ENCODE measurements at regions of chr15 and their contacts with region 1.

Region 1: GRCh38 chr15:24956111-24956838 is 1.5 kb downstream of the SNRPN start:
- DNase-seq: peak; percentile 39 to 68
- H3K4me3 ChIP-seq: peak overlapping the region; percentile 70 to 94 (median 80)
- H3K27ac ChIP-seq: peak overlapping the region; percentile 67; the same call in 1 of the 2 replicates
- H3K4me1 ChIP-seq: peaks cover 0 to 8% (median 3%) of the 10 kb centered on the region in 4 experiments; a peak in 2 of 7 replicates
- H3K27me3 ChIP-seq: no peaks in the 10 kb centered on the region
- CTCF ChIP-seq: no peak
- EP300 ChIP-seq: no peak
- POLR2A ChIP-seq: peak; percentile 66 to 94; a peak in 2 of 3 replicates
- RAD21 ChIP-seq: no peak

Region 2: GRCh38 chr15:24898715-24899272 is 57.5 kb before region 1 on chr15:
- CTCF ChIA-PET with region 1: no interaction called
- POLR2A ChIA-PET with region 1: interaction called, 44 read pairs
- DNase-seq: peak; percentile 34 to 58
- H3K4me3 ChIP-seq: peak overlapping the region in 1 of 4 experiments; percentile 14; a peak in 1 of 8 replicates
- H3K27ac ChIP-seq: no peak overlapping the region
- H3K4me1 ChIP-seq: peaks cover 3 to 9% (median 7%) of the 10 kb centered on the region in 4 experiments
- H3K27me3 ChIP-seq: no peaks in the 10 kb centered on the region
- CTCF ChIP-seq: no peak
- EP300 ChIP-seq: peak in 1 of 2 experiments; percentile 84; a peak in 1 of 3 replicates
- POLR2A ChIP-seq: no peak
- RAD21 ChIP-seq: no peak; a peak in 1 of 4 replicates

Region 3: GRCh38 chr15:24944954-24945353 is 11.3 kb before region 1 on chr15:
- CTCF ChIA-PET with region 1: no interaction called
- POLR2A ChIA-PET with region 1: interaction called, 16 read pairs
- DNase-seq: no peak
- H3K4me3 ChIP-seq: no peak overlapping the region
- H3K27ac ChIP-seq: no peak overlapping the region
- H3K4me1 ChIP-seq: no peaks in the 10 kb centered on the region
- H3K27me3 ChIP-seq: no peaks in the 10 kb centered on the region
- CTCF ChIP-seq: no peak
- EP300 ChIP-seq: no peak
- POLR2A ChIP-seq: no peak
- RAD21 ChIP-seq: no peak

Region 4: DNA sequence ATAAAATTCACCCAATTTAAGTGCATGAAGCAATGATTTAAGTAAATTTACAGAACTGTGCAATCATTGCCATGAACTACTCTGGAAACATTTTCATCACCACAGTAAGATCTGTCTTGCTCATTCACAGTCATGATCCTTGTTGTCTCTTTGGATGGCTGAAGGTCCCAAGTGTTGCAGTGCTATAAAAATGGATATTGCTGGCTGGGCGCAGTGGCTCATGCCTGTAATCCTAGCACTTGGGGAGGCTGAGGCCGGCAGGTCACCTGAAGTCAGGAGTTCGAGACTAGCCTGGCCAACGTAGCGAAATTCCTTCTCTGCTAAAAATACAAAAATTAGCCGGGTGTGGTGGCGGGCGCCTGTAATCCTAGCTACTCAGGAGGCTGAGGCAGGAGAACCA is 15.5 kb after region 1 on chr15:
- CTCF ChIA-PET with region 1: no interaction called
- POLR2A ChIA-PET with region 1: interaction called, 37 read pairs
- DNase-seq: no peak
- H3K4me3 ChIP-seq: no peak overlapping the region
- H3K27ac ChIP-seq: no peak overlapping the region
- H3K4me1 ChIP-seq: no peaks in the 10 kb centered on the region
- H3K27me3 ChIP-seq: no peaks in the 10 kb centered on the region; a peak in 1 of 7 replicates
- CTCF ChIP-seq: no peak
- EP300 ChIP-seq: no peak
- POLR2A ChIP-seq: no peak; a peak in 1 of 3 replicates
- RAD21 ChIP-seq: no peak